Dendritic cell treated with granulocyte-macrophage colony-stimulating factor and Interleukin-4, amounts not matched to agents 40 ng/mL and 50 ng/mL, for 4 days (primary cell): ENCODE measurements at regions of chr9 and their contacts with region 1.

Region 1: DNA sequence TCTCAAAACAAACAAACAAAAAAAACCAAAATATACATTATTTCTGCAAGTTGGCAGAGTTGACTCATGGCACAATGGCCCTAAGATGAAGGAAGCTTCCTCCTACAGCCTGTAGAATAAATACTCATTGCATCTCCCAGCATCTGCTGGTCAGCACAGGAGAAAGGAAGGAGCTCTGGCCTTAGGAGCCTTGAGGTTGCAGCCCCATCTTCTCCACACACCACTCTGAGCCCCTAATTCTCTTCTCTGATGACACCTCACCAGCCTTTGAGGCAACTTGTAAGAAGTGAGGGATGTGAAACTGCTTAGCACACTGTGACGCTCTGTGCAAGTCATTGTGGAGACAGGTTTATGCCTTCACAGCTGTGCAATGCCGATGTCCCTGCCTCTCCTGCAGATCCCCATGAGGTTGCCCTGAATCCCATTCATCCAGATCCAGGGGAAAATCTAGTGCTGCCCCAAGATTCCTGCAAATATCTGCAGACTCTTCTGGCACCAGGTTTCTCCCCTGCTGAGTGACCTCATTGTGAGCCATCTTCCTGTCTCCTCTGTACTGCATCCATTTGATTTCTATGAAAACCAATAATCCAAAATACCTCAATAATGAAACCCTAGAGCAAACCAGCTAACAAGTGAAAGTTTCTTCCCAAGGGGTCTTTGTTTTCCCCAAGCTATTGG is 65.3 kb upstream of the TGFBR1 start:
- H3K4me3 Mint-ChIP-seq: no peak overlapping the region
- H3K27ac Mint-ChIP-seq: peak overlapping the region; percentile 77
- H3K4me1 Mint-ChIP-seq: peaks cover 38% of the 10 kb centered on the region
- H3K27me3 Mint-ChIP-seq: peaks cover 48% of the 10 kb centered on the region

Region 2: GRCh38 chr9:99075246-99075912 is 35.7 kb after region 1 on chr9:
- intact Hi-C with region 1: no loop called
- H3K4me3 Mint-ChIP-seq: no peak overlapping the region
- H3K27ac Mint-ChIP-seq: no peak overlapping the region
- H3K4me1 Mint-ChIP-seq: peaks cover 34% of the 10 kb centered on the region
- H3K27me3 Mint-ChIP-seq: peaks cover 10% of the 10 kb centered on the region

Region 3: GRCh38 chr9:99085949-99086948 is 46.6 kb after region 1 on chr9:
- intact Hi-C with region 1: loop called (anchors 5 kb)
- H3K4me3 Mint-ChIP-seq: peak overlapping the region; percentile 15
- H3K27ac Mint-ChIP-seq: peak overlapping the region; percentile 83
- H3K4me1 Mint-ChIP-seq: peaks cover 36% of the 10 kb centered on the region
- H3K27me3 Mint-ChIP-seq: peaks cover 13% of the 10 kb centered on the region